PC-9 (cell line): ENCODE measurements at regions of chr20 and their contacts with region 1.

Region 1: GRCh38 chr20:50450881-50451752 is 59.1 kb upstream of the PTPN1 start:
- DNase-seq: peak in 1 of 2 experiments; percentile 54
- H3K4me3 ChIP-seq: no peak overlapping the region
- H3K27ac ChIP-seq: no peak overlapping the region
- H3K4me1 ChIP-seq: peaks cover 23% of the 10 kb centered on the region
- H3K27me3 ChIP-seq: no peaks in the 10 kb centered on the region
- CTCF ChIP-seq: no peak

Region 2: GRCh38 chr20:49785852-49786175 is 665.3 kb before region 1 on chr20:
- CTCF ChIA-PET with region 1: no interaction called
- POLR2A ChIA-PET with region 1: no interaction called
- intact Hi-C with region 1: no loop called
- DNase-seq: no peak
- H3K4me3 ChIP-seq: no peak overlapping the region
- H3K27ac ChIP-seq: no peak overlapping the region
- H3K4me1 ChIP-seq: peaks cover 43% of the 10 kb centered on the region
- H3K27me3 ChIP-seq: no peaks in the 10 kb centered on the region
- CTCF ChIP-seq: no peak

Region 3: DNA sequence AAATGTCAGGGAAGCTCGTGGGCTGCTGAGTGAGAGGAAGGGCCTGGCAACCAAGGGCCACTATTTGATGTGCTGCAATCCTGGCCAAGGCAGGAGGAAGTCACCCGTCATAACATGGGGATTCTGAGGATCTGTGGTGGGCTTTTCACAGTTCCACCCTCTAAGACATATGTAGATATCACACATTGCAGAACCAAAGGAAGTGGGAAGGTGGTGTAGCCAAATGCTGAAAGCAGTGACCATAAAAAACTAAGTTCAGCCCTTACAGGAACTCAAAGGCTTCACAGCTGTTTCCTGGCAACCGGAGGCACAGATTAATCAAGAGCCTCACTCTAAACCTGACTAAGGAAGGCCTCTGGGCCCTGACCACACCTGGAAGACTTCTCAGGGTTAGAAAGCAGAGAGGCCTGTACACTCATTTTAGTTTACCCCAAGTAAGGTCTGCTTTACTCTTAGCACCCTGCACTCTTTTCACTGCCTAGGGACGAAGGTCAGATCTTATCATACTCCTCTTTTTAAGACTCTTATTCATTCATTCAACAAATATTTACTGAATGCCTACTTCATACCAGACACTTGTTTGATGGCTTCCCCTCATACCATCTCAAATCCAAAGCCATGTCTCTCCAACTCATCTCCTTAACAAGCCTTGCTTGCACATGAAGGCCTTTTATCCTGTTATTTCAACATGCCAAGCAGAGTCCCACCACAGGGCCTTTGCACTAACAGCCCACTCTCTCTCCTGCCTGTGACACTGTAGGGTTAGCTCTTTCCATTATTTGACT is 340.8 kb before region 1 on chr20:
- CTCF ChIA-PET with region 1: no interaction called
- POLR2A ChIA-PET with region 1: interaction called, 13 read pairs
- intact Hi-C with region 1: no loop called
- DNase-seq: peak; percentile 69 to 94
- H3K4me3 ChIP-seq: peak overlapping the region; percentile 94; the same call in 1 of the 2 replicates
- H3K27ac ChIP-seq: peak overlapping the region; percentile 64
- H3K4me1 ChIP-seq: peaks cover 39% of the 10 kb centered on the region
- H3K27me3 ChIP-seq: no peaks in the 10 kb centered on the region
- CTCF ChIP-seq: no peak

Region 4: GRCh38 chr20:50372776-50373167 is 78.3 kb before region 1 on chr20:
- CTCF ChIA-PET with region 1: no interaction called
- POLR2A ChIA-PET with region 1: interaction called, 12 read pairs
- intact Hi-C with region 1: no loop called
- DNase-seq: peak; percentile 68 to 71
- H3K4me3 ChIP-seq: no peak overlapping the region
- H3K27ac ChIP-seq: peak overlapping the region; percentile 21
- H3K4me1 ChIP-seq: peaks cover 60% of the 10 kb centered on the region
- H3K27me3 ChIP-seq: no peaks in the 10 kb centered on the region
- CTCF ChIP-seq: no peak

Region 5: DNA sequence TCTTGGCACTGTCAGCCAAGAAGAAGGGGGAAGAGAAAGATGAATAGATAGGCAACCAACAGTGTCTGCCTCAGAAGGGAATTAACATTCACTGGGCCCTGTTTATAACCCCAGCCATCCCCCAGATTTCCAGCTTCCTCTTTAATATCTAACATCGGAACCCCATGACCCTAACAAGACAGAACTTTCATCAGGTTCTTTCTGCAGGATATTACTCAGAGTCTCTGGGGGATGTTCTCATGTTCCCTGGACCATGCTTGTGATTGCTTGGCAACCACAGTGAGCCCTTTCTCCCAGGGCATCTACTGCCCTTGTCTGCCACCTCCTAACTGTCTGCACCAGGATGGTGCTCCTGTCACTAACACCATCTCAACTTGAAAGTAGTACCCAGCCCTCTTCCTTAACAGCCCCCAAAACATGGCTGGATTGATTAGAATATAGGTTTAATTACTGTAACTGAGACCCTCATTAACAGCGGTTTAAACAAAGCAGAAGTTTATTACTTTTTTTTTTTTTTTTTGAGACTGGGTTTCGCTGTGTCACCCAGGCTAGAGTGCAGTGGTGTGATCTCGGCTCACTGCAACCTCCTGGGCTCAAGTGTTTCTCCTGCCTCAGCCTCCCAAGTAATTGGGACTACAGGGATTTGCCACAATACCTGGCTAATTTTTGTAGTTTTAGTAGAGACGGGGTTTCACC is 47.1 kb after region 1 on chr20:
- CTCF ChIA-PET with region 1: no interaction called
- POLR2A ChIA-PET with region 1: no interaction called
- intact Hi-C with region 1: no loop called
- DNase-seq: no peak
- H3K4me3 ChIP-seq: no peak overlapping the region
- H3K27ac ChIP-seq: no peak overlapping the region
- H3K4me1 ChIP-seq: peaks cover 22% of the 10 kb centered on the region
- H3K27me3 ChIP-seq: no peaks in the 10 kb centered on the region
- CTCF ChIP-seq: no peak